ENCODE measurements at regions of chr18 and their contacts with region 1.

Region 1: GRCh38 chr18:44358402-44358801 is 322.3 kb upstream of the SETBP1 start:
- DNase-seq: no peak
- H3K4me3 Mint-ChIP-seq: no peak overlapping the region
- H3K27ac Mint-ChIP-seq: no peak overlapping the region
- H3K4me1 Mint-ChIP-seq: no peaks in the 10 kb centered on the region
- H3K27me3 Mint-ChIP-seq: no peaks in the 10 kb centered on the region

Region 2: GRCh38 chr18:44548291-44549221 is 190.2 kb after region 1 on chr18:
- intact Hi-C with region 1: loop called (anchors 5 kb)
- DNase-seq: no peak
- H3K4me3 Mint-ChIP-seq: no peak overlapping the region
- H3K27ac Mint-ChIP-seq: no peak overlapping the region
- H3K4me1 Mint-ChIP-seq: no peaks in the 10 kb centered on the region
- H3K27me3 Mint-ChIP-seq: no peaks in the 10 kb centered on the region